Naive thymus-derived CD4-positive, alpha-beta T cell (primary cell): ENCODE measurements at regions of chr11 and their contacts with region 1.

Region 1: GRCh38 chr11:76318744-76319384 is 62.1 kb downstream of the THAP12 start:
- DNase-seq: peak; percentile 61 to 88 (median 80)
- ATAC-seq: peak; percentile 96
- H3K4me3 ChIP-seq: no peak overlapping the region
- H3K4me3 Mint-ChIP-seq: no peak overlapping the region
- H3K27ac ChIP-seq: no peak overlapping the region
- H3K27ac Mint-ChIP-seq: no peak overlapping the region
- H3K4me1 ChIP-seq: no peaks in the 10 kb centered on the region
- H3K4me1 Mint-ChIP-seq: peaks cover 0 to 17% (median 0%) of the 10 kb centered on the region in 7 donors
- H3K27me3 ChIP-seq: no peaks in the 10 kb centered on the region
- H3K27me3 Mint-ChIP-seq: peaks cover 35 to 48% (median 44%) of the 10 kb centered on the region in 5 donors

Region 2: GRCh38 chr11:75721855-75722668 is 596.8 kb before region 1 on chr11:
- CTCF ChIA-PET with region 1: no interaction called
- POLR2A ChIA-PET with region 1: no interaction called
- intact Hi-C with region 1: loop called in 1 of 2 experiments (anchors 5 kb)
- DNase-seq: no peak
- ATAC-seq: no peak
- H3K4me3 ChIP-seq: no peak overlapping the region
- H3K4me3 Mint-ChIP-seq: no peak overlapping the region
- H3K27ac ChIP-seq: no peak overlapping the region
- H3K27ac Mint-ChIP-seq: no peak overlapping the region
- H3K4me1 ChIP-seq: no peaks in the 10 kb centered on the region
- H3K4me1 Mint-ChIP-seq: peaks cover 0 to 5% (median 0%) of the 10 kb centered on the region in 7 donors
- H3K27me3 ChIP-seq: no peaks in the 10 kb centered on the region
- H3K27me3 Mint-ChIP-seq: peaks cover 0 to 1% (median 0%) of the 10 kb centered on the region in 5 donors

Region 3: DNA sequence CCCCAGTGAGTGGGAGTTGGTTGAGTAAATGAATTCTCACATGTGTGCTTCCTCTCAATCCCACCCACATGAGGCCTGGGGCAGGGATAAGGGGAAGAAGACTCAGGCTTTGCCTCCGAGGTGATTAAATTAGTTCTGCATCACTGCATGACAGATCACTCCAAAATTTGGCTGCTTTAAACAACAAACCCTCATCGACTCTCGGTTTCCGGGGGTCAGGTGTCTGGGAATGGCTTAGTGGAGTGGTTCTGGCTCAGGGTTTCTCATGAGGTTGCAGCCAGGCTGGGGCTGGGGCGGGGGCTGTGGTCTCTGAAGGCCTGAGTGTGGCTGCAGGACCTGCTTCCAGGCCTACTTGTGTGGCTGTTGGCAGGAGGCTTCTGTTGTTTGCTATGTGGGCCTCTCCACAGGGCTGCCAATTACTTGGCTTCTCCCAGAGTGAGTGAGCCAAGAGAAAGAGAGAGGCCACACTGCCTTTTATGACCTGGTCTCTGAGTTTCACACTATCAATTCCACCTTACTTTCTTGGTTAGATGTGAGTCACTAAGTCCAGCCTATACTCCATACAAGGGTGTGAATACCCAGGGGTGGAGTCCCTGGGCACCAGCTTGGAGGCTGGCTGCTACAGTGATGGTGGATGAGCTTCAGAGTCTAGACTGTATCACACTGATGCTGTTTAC is 585.3 kb before region 1 on chr11:
- CTCF ChIA-PET with region 1: no interaction called
- POLR2A ChIA-PET with region 1: no interaction called
- intact Hi-C with region 1: no loop called
- DNase-seq: no peak
- ATAC-seq: no peak
- H3K4me3 ChIP-seq: no peak overlapping the region
- H3K4me3 Mint-ChIP-seq: no peak overlapping the region
- H3K27ac ChIP-seq: no peak overlapping the region
- H3K27ac Mint-ChIP-seq: no peak overlapping the region
- H3K4me1 ChIP-seq: no peaks in the 10 kb centered on the region
- H3K4me1 Mint-ChIP-seq: no peaks in the 10 kb centered on the region
- H3K27me3 ChIP-seq: no peaks in the 10 kb centered on the region
- H3K27me3 Mint-ChIP-seq: peaks cover 4 to 16% (median 9%) of the 10 kb centered on the region in 5 donors

Region 4: DNA sequence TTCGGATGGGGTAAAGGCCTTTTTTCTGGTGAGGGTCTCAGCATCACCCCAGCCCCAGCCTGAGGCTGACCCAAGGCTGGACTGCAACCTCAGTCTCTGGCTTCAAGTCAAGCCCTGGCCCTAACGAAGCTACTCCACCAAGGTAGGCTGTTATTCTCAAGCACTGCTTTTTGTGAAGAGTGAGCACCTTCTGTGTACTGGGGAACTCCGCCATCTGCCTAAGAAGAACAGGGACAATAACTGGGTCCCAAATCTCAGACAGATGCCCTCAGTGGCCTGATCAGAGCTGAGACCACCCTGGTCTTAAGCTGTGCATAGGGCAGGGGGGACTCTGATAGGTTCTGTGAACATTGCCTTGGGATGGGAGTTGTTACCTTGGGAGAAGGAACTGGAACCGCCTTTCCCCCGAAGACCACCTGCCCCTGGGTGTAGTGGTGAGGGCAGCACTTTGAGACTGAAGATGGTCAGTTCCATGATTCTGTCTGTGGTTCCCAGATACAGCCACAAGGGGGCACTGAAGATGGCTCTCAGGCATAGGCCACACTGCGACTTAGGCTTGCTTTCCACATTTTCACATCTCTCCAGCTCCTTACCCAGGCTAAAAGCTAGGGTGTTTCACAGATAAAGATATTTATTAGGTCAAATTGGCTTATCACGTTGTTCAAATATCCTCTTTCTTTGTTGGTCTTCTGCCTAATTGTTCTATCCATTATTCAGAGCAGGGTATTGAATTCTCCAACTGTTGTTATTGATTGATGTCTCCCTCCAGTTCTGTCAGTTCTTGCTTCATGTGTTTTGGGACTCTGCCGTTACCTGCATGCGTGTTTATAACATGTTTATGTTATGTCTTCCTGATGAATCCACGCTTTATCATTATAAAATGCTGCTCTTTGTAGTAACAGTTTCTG is 515.7 kb before region 1 on chr11:
- CTCF ChIA-PET with region 1: no interaction called
- POLR2A ChIA-PET with region 1: no interaction called
- intact Hi-C with region 1: loop called in 1 of 2 experiments (anchors 1 kb)
- DNase-seq: peak; percentile 39 to 67 (median 54)
- ATAC-seq: peak; percentile 91
- H3K4me3 ChIP-seq: no peak overlapping the region
- H3K4me3 Mint-ChIP-seq: no peak overlapping the region
- H3K27ac ChIP-seq: no peak overlapping the region
- H3K27ac Mint-ChIP-seq: no peak overlapping the region
- H3K4me1 ChIP-seq: peaks cover 0 to 14% of the 10 kb centered on the region in 2 donors
- H3K4me1 Mint-ChIP-seq: peaks cover 0 to 22% (median 11%) of the 10 kb centered on the region in 7 donors
- H3K27me3 ChIP-seq: no peaks in the 10 kb centered on the region
- H3K27me3 Mint-ChIP-seq: no peaks in the 10 kb centered on the region

Region 5: DNA sequence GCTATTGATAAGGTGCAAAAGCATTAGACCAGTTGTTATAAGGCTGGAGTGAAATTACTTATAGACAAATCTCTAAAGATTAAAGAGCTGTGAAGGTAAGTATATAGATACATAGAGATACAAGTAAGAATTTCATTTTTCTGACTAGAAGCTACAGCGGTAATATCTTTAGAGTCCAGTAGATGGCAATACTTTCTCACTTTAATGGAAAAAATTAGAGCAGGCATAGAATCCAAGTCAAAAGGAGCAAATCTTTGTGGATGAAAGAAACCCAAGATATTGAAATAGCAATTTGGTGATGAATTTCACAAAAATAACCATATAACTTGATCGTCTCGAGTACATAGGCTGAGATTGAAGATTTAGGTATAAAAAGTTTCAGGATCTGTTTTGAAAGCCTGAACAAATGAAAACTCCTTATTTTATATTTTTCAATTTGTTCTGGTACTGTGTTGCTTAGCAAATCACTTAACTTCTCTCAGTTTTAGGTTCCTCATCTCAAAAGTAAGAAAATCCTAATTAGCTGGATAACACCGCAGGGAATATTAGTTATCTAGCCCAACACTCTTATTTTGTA is 421.9 kb before region 1 on chr11:
- CTCF ChIA-PET with region 1: interaction called, 5 read pairs
- POLR2A ChIA-PET with region 1: no interaction called
- intact Hi-C with region 1: loop called in 1 of 2 experiments (anchors 1 kb)
- DNase-seq: peak in 5 of 9 donors; percentile 25 to 36 (median 32)
- ATAC-seq: no peak
- H3K4me3 ChIP-seq: no peak overlapping the region
- H3K4me3 Mint-ChIP-seq: no peak overlapping the region
- H3K27ac ChIP-seq: no peak overlapping the region
- H3K27ac Mint-ChIP-seq: no peak overlapping the region
- H3K4me1 ChIP-seq: no peaks in the 10 kb centered on the region
- H3K4me1 Mint-ChIP-seq: peaks cover 3 to 17% (median 4%) of the 10 kb centered on the region in 7 donors
- H3K27me3 ChIP-seq: no peaks in the 10 kb centered on the region
- H3K27me3 Mint-ChIP-seq: no peaks in the 10 kb centered on the region

Region 6: DNA sequence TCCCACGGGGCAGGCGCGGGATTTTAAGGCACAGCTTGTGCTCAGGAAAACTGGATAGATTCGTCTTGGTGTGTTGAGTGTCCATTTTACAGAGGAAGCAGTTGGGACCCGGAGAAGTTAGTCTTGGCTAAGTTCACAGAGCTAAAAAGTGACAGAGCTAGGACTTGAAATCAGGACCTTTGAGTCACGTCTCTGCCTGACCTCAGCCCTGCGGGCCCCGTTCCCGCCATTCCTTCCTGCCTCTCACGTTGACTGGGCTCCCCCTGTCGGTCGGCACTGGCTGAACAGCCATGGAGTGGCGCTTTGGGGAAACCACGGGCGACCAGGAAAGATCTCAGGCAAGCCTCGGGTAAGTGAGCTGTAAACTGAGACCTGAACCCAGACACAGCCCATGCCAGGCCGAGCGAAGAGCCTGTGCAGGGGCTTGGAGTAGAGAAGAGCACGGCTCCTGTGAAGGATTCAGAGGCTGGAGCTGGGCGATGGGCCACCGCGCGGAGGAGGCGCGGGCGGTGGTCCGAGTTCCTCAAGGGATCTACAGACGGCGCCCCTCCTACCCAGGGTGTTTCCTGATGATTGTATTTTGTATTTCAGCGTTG is 166.7 kb before region 1 on chr11:
- CTCF ChIA-PET with region 1: no interaction called
- POLR2A ChIA-PET with region 1: no interaction called
- intact Hi-C with region 1: loop called in 1 of 2 experiments (anchors 1 kb)
- DNase-seq: peak; percentile 46 to 88 (median 69)
- ATAC-seq: peak; percentile 89
- H3K4me3 ChIP-seq: peak overlapping the region; percentile 54
- H3K4me3 Mint-ChIP-seq: peak overlapping the region; percentile 60 to 90 (median 78)
- H3K27ac ChIP-seq: no peak overlapping the region
- H3K27ac Mint-ChIP-seq: peak overlapping the region in 3 of 9 donors; percentile 12 to 35 (median 16)
- H3K4me1 ChIP-seq: peaks cover 0 to 27% of the 10 kb centered on the region in 2 donors
- H3K4me1 Mint-ChIP-seq: peaks cover 16 to 25% (median 21%) of the 10 kb centered on the region in 7 donors
- H3K27me3 ChIP-seq: no peaks in the 10 kb centered on the region
- H3K27me3 Mint-ChIP-seq: peaks cover 4 to 22% (median 10%) of the 10 kb centered on the region in 5 donors

Region 7: DNA sequence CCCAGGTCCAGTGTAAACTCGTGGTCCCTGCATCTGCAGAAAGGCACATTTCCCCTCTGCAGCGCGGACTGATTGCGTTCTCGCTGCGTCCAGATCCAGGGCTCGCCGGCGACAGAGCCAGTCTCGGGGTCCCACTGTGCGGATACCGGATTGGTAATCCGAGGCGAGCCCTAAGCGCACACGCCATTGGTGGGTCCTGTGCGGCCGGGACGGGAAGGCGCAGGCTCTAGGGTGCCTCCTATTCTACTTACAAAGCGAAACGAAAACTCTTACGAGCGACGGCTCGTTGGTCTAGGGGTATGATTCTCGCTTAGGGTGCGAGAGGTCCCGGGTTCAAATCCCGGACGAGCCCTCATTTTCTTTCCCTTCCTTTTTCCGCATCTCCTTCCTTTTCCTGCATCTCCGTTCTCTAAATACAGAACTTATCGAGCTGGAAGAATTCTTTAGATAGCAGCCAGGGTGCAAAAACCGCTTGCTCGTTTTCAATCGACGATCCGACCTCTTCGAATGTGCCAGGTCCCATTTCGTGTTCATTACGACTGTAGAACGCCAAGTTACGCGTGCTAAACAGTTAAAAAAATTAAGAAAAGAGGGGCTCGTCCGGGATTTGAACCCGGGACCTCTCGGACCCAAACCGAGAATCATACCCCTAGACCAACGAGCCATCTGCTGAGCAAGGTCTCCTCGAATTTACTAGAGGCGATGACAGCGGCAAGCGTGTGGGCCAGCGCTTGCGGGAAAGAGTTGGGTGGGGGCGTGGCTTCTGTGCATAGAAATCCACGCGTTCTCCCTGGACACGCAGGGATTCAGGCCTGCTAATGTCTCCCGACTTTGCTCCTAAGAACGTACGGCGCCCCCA is 83.4 kb before region 1 on chr11:
- CTCF ChIA-PET with region 1: interaction called, 3 read pairs
- POLR2A ChIA-PET with region 1: interaction called, 4 read pairs
- intact Hi-C with region 1: loop called in 1 of 2 experiments (anchors 1 kb)
- DNase-seq: peak; percentile 79 to 95 (median 92)
- ATAC-seq: peak; percentile 87
- H3K4me3 ChIP-seq: peak overlapping the region; percentile 98
- H3K4me3 Mint-ChIP-seq: peak overlapping the region; percentile 82 to 94 (median 91)
- H3K27ac ChIP-seq: peak overlapping the region; percentile 57
- H3K27ac Mint-ChIP-seq: peak overlapping the region; percentile 89 to 99 (median 96)
- H3K4me1 ChIP-seq: peaks cover 26 to 40% of the 10 kb centered on the region in 2 donors
- H3K4me1 Mint-ChIP-seq: peaks cover 16 to 65% (median 55%) of the 10 kb centered on the region in 7 donors
- H3K27me3 ChIP-seq: no peaks in the 10 kb centered on the region
- H3K27me3 Mint-ChIP-seq: peaks cover 0 to 30% (median 0%) of the 10 kb centered on the region in 5 donors

Region 8: DNA sequence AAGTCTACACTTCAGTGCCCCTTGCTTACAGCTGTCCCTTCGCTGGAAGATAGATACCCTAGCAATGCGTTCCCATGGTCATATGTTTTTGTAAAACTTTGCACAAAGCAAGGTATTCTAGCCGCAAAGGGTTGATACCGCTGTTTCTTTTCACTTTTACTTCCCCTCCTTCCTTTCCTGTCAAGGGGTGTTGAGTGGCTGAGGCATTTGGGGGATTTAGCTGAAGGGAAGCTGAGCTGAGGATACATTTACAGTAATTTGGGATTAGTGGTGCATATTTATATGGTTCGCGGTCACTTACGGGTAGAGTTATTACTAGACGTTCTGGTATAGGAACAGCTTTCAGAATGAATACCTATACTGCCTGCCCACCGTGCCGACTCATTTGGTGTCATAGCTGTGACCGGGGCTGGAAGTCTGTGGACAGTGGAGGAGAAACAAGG is 25.7 kb before region 1 on chr11:
- CTCF ChIA-PET with region 1: interaction called, 8 read pairs
- POLR2A ChIA-PET with region 1: no interaction called
- intact Hi-C with region 1: loop called in 1 of 2 experiments (anchors 2 kb)
- DNase-seq: no peak
- ATAC-seq: no peak
- H3K4me3 ChIP-seq: no peak overlapping the region
- H3K4me3 Mint-ChIP-seq: peak overlapping the region in 9 of 10 donors; percentile 4 to 77 (median 36)
- H3K27ac ChIP-seq: no peak overlapping the region
- H3K27ac Mint-ChIP-seq: peak overlapping the region in 7 of 9 donors; percentile 36 to 96 (median 73)
- H3K4me1 ChIP-seq: peaks cover 0 to 12% of the 10 kb centered on the region in 2 donors
- H3K4me1 Mint-ChIP-seq: peaks cover 12 to 37% (median 28%) of the 10 kb centered on the region in 7 donors
- H3K27me3 ChIP-seq: no peaks in the 10 kb centered on the region
- H3K27me3 Mint-ChIP-seq: peaks cover 0 to 2% (median 0%) of the 10 kb centered on the region in 5 donors